CD8-positive, alpha-beta T cell (primary cell): ENCODE measurements at regions of chr7 and their contacts with region 1.

Region 1: GRCh38 chr7:5694912-5695726 is 86.3 kb downstream of the RNF216 start:
- DNase-seq: peak; percentile 18 to 88 (median 72)
- ATAC-seq: peak; percentile 75
- H3K4me3 ChIP-seq: peak overlapping the region; percentile 49 to 64
- H3K4me3 Mint-ChIP-seq: peak overlapping the region; percentile 92
- H3K27ac ChIP-seq: peak overlapping the region; percentile 54 to 65
- H3K27ac Mint-ChIP-seq: peak overlapping the region; percentile 96
- H3K4me1 ChIP-seq: peaks cover 97% of the 10 kb centered on the region
- H3K4me1 Mint-ChIP-seq: peaks cover 100% of the 10 kb centered on the region
- H3K27me3 ChIP-seq: no peaks in the 10 kb centered on the region
- H3K27me3 Mint-ChIP-seq: no peaks in the 10 kb centered on the region
- CTCF ChIP-seq: no peak

Region 2: GRCh38 chr7:4919969-4920766 is 775.0 kb before region 1 on chr7:
- CTCF ChIA-PET with region 1: no interaction called
- POLR2A ChIA-PET with region 1: no interaction called
- intact Hi-C with region 1: no loop called
- DNase-seq: no peak
- ATAC-seq: no peak
- H3K4me3 ChIP-seq: no peak overlapping the region
- H3K4me3 Mint-ChIP-seq: no peak overlapping the region
- H3K27ac ChIP-seq: no peak overlapping the region
- H3K27ac Mint-ChIP-seq: no peak overlapping the region
- H3K4me1 ChIP-seq: no peaks in the 10 kb centered on the region
- H3K4me1 Mint-ChIP-seq: no peaks in the 10 kb centered on the region
- H3K27me3 ChIP-seq: no peaks in the 10 kb centered on the region
- H3K27me3 Mint-ChIP-seq: peaks cover 8% of the 10 kb centered on the region
- CTCF ChIP-seq: no peak

Region 3: DNA sequence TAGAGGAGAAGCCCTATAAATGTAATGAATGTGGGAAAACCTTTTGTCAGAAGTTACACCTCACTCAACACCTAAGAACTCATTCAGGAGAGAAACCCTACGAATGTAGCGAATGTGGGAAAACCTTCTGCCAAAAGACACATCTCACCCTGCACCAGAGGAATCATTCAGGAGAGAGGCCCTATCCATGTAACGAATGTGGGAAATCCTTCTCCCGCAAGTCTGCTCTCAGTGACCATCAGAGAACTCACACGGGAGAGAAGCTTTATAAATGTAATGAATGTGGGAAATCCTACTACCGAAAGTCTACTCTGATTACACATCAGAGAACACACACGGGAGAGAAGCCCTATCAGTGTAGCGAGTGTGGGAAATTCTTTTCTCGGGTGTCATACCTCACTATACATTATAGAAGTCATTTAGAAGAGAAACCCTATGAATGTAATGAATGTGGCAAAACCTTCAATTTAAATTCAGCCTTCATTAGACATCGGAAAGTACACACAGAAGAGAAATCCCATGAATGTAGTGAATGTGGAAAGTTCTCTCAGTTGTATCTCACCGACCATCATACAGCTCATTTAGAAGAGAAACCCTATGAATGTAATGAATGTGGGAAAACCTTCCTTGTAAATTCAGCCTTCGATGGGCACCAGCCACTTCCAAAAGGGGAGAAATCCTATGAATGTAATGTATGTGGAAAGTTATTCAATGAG is 630.6 kb before region 1 on chr7:
- CTCF ChIA-PET with region 1: no interaction called
- POLR2A ChIA-PET with region 1: no interaction called
- intact Hi-C with region 1: no loop called
- DNase-seq: no peak
- ATAC-seq: no peak
- H3K4me3 ChIP-seq: peak overlapping the region in 1 of 2 experiments; percentile 10
- H3K4me3 Mint-ChIP-seq: no peak overlapping the region
- H3K27ac ChIP-seq: no peak overlapping the region
- H3K27ac Mint-ChIP-seq: no peak overlapping the region
- H3K4me1 ChIP-seq: no peaks in the 10 kb centered on the region
- H3K4me1 Mint-ChIP-seq: no peaks in the 10 kb centered on the region
- H3K27me3 ChIP-seq: no peaks in the 10 kb centered on the region
- H3K27me3 Mint-ChIP-seq: no peaks in the 10 kb centered on the region
- CTCF ChIP-seq: no peak

Region 4: GRCh38 chr7:5677538-5678294 is 17.4 kb before region 1 on chr7:
- CTCF ChIA-PET with region 1: interaction called, 11 read pairs
- POLR2A ChIA-PET with region 1: interaction called, 7 read pairs
- intact Hi-C with region 1: no loop called
- DNase-seq: peak in 6 of 9 experiments; percentile 17 to 66 (median 48)
- ATAC-seq: peak; percentile 54
- H3K4me3 ChIP-seq: no peak overlapping the region
- H3K4me3 Mint-ChIP-seq: no peak overlapping the region
- H3K27ac ChIP-seq: no peak overlapping the region
- H3K27ac Mint-ChIP-seq: peak overlapping the region; percentile 30
- H3K4me1 ChIP-seq: peaks cover 36% of the 10 kb centered on the region
- H3K4me1 Mint-ChIP-seq: peaks cover 58% of the 10 kb centered on the region
- H3K27me3 ChIP-seq: no peaks in the 10 kb centered on the region
- H3K27me3 Mint-ChIP-seq: no peaks in the 10 kb centered on the region
- CTCF ChIP-seq: peak; percentile 27

Region 5: GRCh38 chr7:5797716-5798115 is 102.6 kb after region 1 on chr7:
- CTCF ChIA-PET with region 1: no interaction called
- POLR2A ChIA-PET with region 1: no interaction called
- intact Hi-C with region 1: no loop called
- DNase-seq: peak in 3 of 9 experiments; percentile 17 to 41 (median 21)
- ATAC-seq: no peak
- H3K4me3 ChIP-seq: no peak overlapping the region
- H3K4me3 Mint-ChIP-seq: no peak overlapping the region
- H3K27ac ChIP-seq: no peak overlapping the region
- H3K27ac Mint-ChIP-seq: no peak overlapping the region
- H3K4me1 ChIP-seq: no peaks in the 10 kb centered on the region
- H3K4me1 Mint-ChIP-seq: no peaks in the 10 kb centered on the region
- H3K27me3 ChIP-seq: no peaks in the 10 kb centered on the region
- H3K27me3 Mint-ChIP-seq: no peaks in the 10 kb centered on the region
- CTCF ChIP-seq: no peak